Common myeloid progenitor, CD34-positive (primary cell): ENCODE measurements at regions of chr6 and their contacts with region 1.

Region 1: GRCh38 chr6:169950558-169950957 is 199.1 kb downstream of the ERMARD start:
- DNase-seq: peak; percentile 52 to 67 (median 62)
- H3K4me3 ChIP-seq: no peak overlapping the region
- H3K27ac ChIP-seq: no peak overlapping the region
- H3K4me1 ChIP-seq: peaks cover 0 to 11% (median 0%) of the 10 kb centered on the region in 4 experiments
- H3K27me3 ChIP-seq: no peaks in the 10 kb centered on the region

Region 2: DNA sequence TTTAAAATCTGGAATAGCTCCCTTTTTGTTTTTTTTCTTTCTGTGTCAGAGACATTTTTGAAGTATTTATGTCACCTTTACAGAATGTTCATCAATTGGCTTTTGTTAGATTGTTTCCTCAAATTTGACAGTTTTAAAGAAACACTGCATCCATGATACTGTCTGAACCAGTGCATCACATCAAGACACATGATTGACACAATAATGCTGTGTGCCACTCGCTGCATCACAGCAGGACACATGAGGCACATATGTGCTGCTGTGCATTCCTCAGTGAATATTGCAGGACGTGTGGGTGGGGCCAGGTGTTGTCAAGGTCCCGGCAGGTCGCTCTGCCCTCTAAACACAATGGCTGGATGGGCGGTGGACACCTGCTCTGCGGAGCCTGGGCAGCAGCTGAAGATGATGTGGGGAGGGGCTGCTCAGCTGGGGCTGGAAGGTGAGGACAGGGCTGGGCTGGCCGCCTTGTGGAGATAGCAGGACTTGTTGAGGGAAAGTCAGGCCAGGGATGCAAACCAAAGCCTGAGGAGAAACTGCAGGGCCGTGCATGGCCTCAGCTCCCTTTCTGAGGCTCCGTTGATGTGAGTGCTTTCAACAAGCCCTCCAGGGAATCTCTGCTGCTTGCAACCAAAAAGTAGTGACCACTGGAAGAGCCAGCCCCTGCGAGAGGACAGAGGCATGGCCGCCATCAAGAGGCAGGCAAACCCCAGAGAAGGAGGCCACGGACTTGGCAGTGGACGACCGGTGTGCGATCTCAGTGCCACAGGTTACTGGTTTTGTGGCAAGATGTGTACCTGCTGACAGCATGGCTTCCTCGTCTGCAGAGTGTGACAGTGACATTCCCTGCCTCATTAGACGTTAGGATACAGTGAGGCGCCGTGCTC is 161.5 kb before region 1 on chr6:
- CTCF ChIA-PET with region 1: no interaction called
- POLR2A ChIA-PET with region 1: no interaction called
- DNase-seq: no peak
- H3K4me3 ChIP-seq: peak overlapping the region in 1 of 7 experiments; percentile 73
- H3K27ac ChIP-seq: no peak overlapping the region
- H3K4me1 ChIP-seq: peaks cover 0 to 15% (median 11%) of the 10 kb centered on the region in 4 experiments
- H3K27me3 ChIP-seq: peaks cover 2 to 26% (median 16%) of the 10 kb centered on the region in 5 experiments

Region 3: GRCh38 chr6:169915769-169916550 is 34.6 kb before region 1 on chr6:
- CTCF ChIA-PET with region 1: no interaction called
- POLR2A ChIA-PET with region 1: no interaction called
- DNase-seq: no peak
- H3K4me3 ChIP-seq: no peak overlapping the region
- H3K27ac ChIP-seq: no peak overlapping the region
- H3K4me1 ChIP-seq: peaks cover 3 to 16% (median 7%) of the 10 kb centered on the region in 4 experiments
- H3K27me3 ChIP-seq: no peaks in the 10 kb centered on the region

Region 4: DNA sequence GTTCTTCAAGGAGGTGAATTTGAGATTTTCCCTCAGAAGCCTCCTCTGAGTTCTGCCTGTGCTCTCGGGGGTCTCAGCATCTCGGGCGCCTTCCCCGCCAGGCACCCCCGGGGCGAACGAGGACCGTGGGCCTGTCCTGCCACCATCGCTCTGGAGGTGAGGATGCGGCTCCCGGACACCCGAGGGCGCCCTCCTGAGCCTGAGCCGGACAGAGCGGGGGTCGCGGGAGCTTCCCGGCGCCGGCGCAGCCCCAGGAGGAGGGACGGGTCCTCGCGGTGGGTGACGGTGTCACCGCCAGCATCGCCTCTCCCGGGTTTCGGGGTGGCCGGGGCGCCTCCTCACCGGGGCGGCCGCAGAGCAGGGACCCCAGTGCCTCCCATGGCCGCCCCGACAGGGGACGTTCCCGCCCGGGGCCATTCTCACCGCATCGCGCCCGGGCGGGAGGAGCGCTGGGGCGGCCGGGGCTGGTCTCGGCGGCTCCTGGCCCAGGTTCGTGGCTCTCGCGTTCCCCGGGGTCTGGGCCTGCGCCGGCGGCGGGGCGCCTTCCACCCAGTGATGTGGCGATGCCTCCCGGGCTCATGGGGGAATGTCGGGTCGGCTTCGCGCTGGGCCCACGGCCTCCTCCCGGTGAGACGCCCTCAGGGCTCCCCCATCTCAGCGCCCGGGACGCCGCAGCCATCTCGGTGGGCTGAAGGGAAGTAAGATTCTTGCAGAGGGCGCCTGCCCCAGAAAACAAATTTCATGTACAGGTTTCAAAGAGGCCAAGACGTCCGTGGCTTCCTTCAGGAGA is 11.4 kb after region 1 on chr6:
- CTCF ChIA-PET with region 1: interaction called, 13 read pairs
- POLR2A ChIA-PET with region 1: no interaction called
- DNase-seq: peak in 2 of 3 donors; percentile 42 to 51
- H3K4me3 ChIP-seq: peak overlapping the region in 4 of 7 experiments; percentile 43 to 76 (median 64)
- H3K27ac ChIP-seq: no peak overlapping the region
- H3K4me1 ChIP-seq: peaks cover 4 to 39% (median 22%) of the 10 kb centered on the region in 4 experiments
- H3K27me3 ChIP-seq: peaks cover 0 to 28% (median 6%) of the 10 kb centered on the region in 5 experiments

Region 5: GRCh38 chr6:170516783-170517616 is 566.4 kb after region 1 on chr6:
- CTCF ChIA-PET with region 1: interaction called, 15 read pairs
- POLR2A ChIA-PET with region 1: no interaction called
- DNase-seq: peak; percentile 45 to 77 (median 72)
- H3K4me3 ChIP-seq: peak overlapping the region in 2 of 7 experiments; percentile 31 to 55
- H3K27ac ChIP-seq: no peak overlapping the region
- H3K4me1 ChIP-seq: peaks cover 0 to 2% (median 0%) of the 10 kb centered on the region in 4 experiments
- H3K27me3 ChIP-seq: no peaks in the 10 kb centered on the region

Region 6: GRCh38 chr6:170529839-170530469 is 579.4 kb after region 1 on chr6:
- CTCF ChIA-PET with region 1: interaction called, 22 read pairs
- POLR2A ChIA-PET with region 1: no interaction called
- DNase-seq: peak; percentile 57 to 76 (median 65)
- H3K4me3 ChIP-seq: no peak overlapping the region
- H3K27ac ChIP-seq: no peak overlapping the region
- H3K4me1 ChIP-seq: no peaks in the 10 kb centered on the region
- H3K27me3 ChIP-seq: no peaks in the 10 kb centered on the region